ENCODE measurements at regions of chr15 and their contacts with region 1.

Region 1: DNA sequence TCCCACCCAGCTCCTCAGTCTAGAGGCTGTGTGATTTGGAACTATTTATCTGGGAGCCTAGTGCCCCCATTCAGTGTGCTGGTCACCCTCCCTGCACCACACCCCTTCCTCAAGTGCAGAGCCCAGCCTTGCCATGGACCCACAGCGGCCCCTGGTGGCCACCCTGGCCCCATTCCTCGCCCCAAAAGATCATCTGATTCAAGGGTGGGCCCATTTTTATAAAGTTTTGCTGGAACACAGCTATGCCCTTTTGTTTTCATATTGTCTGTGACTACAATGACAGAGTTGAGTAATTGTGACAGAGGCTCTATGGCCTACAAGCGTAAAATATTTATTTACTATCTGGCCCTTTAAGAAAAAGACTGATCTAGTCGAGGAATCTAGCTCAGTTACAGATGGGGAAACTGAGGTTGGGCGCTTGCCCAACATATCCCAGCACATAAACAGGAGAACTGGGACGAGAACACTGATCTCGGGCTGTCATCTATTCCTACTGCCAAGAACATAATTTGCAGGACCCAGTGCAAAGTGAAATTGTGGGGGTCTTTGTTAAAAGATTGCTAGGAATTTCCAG is 1.8 kb downstream of the FES start:
- DNase-seq: peak; percentile 70 to 78 (median 71)
- H3K4me3 ChIP-seq: peak overlapping the region; percentile 69 to 99 (median 95)
- H3K4me3 Mint-ChIP-seq: peak overlapping the region; percentile 93 to 98
- H3K27ac ChIP-seq: peak overlapping the region; percentile 78 to 88
- H3K27ac Mint-ChIP-seq: peak overlapping the region; percentile 81 to 96 (median 94)
- H3K4me1 ChIP-seq: peaks cover 31 to 56% of the 10 kb centered on the region in 2 donors
- H3K4me1 Mint-ChIP-seq: peaks cover 42% of the 10 kb centered on the region
- H3K27me3 ChIP-seq: no peaks in the 10 kb centered on the region
- H3K27me3 Mint-ChIP-seq: peaks cover 0 to 1% (median 0%) of the 10 kb centered on the region in 3 donors
- CTCF ChIP-seq: peak; percentile 100

Region 2: DNA sequence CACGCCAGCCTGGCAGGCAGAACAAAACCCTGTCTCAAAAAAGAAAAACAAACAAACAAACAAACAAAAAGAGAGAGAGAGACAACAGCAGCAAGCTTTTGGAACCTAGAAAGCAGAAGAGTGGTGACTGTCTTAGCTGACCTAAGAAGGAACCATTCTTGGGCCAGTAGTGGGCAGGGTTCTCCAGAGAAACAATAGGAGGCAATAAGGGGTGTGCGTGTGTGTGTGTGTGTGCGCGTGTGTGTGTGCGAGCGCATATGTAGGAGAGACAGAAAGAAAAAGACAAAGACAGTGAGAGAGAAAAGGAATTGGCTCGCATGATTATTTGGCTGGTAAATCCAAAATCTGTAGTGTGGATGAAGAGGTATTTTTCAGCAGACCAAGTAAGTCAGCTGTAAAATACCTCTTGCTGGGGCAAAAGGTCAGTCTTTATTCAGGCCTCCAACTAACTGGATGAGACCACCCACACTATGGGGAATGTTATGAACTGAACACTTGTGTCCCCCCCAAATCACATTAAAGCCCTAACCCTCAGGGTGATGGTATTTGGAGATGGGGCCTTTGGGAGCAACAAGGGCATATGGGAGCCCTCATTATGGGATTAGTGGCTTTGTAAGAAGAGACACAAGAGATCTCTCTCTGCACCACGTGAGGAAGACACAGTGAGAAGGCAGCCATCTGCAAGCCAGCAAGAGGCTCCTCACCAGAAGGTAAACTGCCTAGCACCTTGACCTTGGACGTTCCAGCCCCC is 184.1 kb before region 1 on chr15:
- intact Hi-C with region 1: loop called in 1 of 2 experiments (anchors 5 kb)
- DNase-seq: peak; percentile 61 to 66 (median 64)
- H3K4me3 ChIP-seq: peak overlapping the region in 1 of 3 experiments; percentile 35
- H3K4me3 Mint-ChIP-seq: peak overlapping the region in 1 of 2 donors; percentile 78
- H3K27ac ChIP-seq: no peak overlapping the region
- H3K27ac Mint-ChIP-seq: peak overlapping the region in 6 of 7 donors; percentile 18 to 80 (median 79)
- H3K4me1 ChIP-seq: peaks cover 22 to 25% of the 10 kb centered on the region in 2 donors
- H3K4me1 Mint-ChIP-seq: peaks cover 38% of the 10 kb centered on the region
- H3K27me3 ChIP-seq: no peaks in the 10 kb centered on the region
- H3K27me3 Mint-ChIP-seq: peaks cover 0 to 3% (median 0%) of the 10 kb centered on the region in 3 donors
- CTCF ChIP-seq: peak; percentile 51

Region 3: GRCh38 chr15:90716976-90717821 is 168.9 kb before region 1 on chr15 and contains the start of gene BLM:
- intact Hi-C with region 1: loop called in 1 of 2 experiments (anchors 10 kb)
- DNase-seq: peak; percentile 96 to 98 (median 98)
- H3K4me3 ChIP-seq: peak within 1 kb of the TSS; percentile 83 to 98 (median 83)
- H3K4me3 Mint-ChIP-seq: peak within 1 kb of the TSS; percentile 93 to 98
- H3K27ac ChIP-seq: peak within 1 kb of the TSS; percentile 87 to 96
- H3K27ac Mint-ChIP-seq: peak within 1 kb of the TSS; percentile 89 to 99 (median 96)
- H3K4me1 ChIP-seq: peaks cover 12 to 26% of the 10 kb centered on the region in 2 donors
- H3K4me1 Mint-ChIP-seq: peaks cover 26% of the 10 kb centered on the region
- H3K27me3 ChIP-seq: no peaks in the 10 kb centered on the region
- H3K27me3 Mint-ChIP-seq: peaks cover 0 to 2% (median 0%) of the 10 kb centered on the region in 3 donors
- CTCF ChIP-seq: peak; percentile 36
- polyA plus RNA-seq, gene BLM: 0.69 to 2.3 (median 1.2) TPM

Measured in CD14-positive monocyte (primary cell).